ENCODE measurements at regions of chr4 and their contacts with region 1.

Region 1: DNA sequence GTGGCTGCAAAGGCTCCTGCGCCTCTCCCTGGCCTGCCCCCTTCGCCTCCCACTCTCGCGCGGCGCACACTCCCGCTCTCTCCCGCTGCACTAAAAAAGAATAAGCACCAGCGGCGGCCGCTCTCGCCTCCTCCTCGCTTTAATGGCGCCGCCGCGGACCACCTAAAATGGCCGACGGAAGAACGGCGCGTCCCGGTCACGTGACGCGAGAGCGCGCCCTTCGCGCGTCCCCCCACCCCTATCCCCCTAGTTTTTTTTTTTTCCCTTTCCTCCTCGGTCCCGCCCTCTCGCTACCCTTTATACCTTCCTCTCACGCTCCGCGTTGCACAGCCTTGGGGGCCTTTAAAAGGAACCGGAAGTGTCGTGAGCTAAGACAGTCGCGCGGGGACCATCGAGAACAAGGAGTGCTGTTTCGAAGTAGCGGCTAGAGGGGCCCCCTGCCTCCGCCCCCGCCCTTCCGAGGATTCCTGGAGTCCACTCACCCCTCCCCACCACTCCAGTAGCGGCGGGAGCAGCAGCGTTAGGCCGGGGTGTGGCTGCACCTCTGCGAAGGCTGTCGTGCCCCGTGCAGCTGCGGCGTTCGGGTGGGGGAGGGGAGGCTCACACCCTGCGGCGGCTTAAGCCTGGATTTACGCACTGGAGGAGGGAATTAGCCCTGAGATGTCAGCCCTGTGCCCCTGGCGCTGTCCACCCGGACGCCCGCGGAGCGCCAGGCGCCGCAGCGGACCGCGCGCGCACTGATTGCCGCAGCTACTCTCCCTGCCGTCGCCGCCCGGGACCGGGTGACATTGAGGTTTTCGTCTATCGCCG is at the start of gene HNRNPD:
- DNase-seq: peak; percentile 100
- H3K4me3 ChIP-seq: peak within 1 kb of the TSS; percentile 97 to 99 (median 98)
- H3K27ac ChIP-seq: peak within 1 kb of the TSS; percentile 99 to 100 (median 100)
- H3K4me1 ChIP-seq: peaks cover 0 to 49% (median 44%) of the 10 kb centered on the region in 4 donors
- H3K27me3 ChIP-seq: no peaks in the 10 kb centered on the region
- CTCF ChIP-seq: no peak
- EP300 ChIP-seq: peak in 2 of 4 donors; percentile 13 to 21
- POLR2A ChIP-seq: peak; percentile 91 to 92
- total RNA-seq, gene HNRNPD: 64.6 to 124 (median 78.0) TPM

Region 2: GRCh38 chr4:82284858-82285805 is 88.9 kb before region 1 on chr4:
- intact Hi-C with region 1: loop called (anchors 5 kb)
- DNase-seq: peak; percentile 100
- H3K4me3 ChIP-seq: peak overlapping the region; percentile 24 to 50 (median 44)
- H3K27ac ChIP-seq: peak overlapping the region; percentile 63 to 76 (median 70)
- H3K4me1 ChIP-seq: peaks cover 0 to 5% (median 5%) of the 10 kb centered on the region in 4 donors
- H3K27me3 ChIP-seq: no peaks in the 10 kb centered on the region
- CTCF ChIP-seq: peak; percentile 65 to 98 (median 81)
- EP300 ChIP-seq: no peak
- POLR2A ChIP-seq: no peak

Region 3: DNA sequence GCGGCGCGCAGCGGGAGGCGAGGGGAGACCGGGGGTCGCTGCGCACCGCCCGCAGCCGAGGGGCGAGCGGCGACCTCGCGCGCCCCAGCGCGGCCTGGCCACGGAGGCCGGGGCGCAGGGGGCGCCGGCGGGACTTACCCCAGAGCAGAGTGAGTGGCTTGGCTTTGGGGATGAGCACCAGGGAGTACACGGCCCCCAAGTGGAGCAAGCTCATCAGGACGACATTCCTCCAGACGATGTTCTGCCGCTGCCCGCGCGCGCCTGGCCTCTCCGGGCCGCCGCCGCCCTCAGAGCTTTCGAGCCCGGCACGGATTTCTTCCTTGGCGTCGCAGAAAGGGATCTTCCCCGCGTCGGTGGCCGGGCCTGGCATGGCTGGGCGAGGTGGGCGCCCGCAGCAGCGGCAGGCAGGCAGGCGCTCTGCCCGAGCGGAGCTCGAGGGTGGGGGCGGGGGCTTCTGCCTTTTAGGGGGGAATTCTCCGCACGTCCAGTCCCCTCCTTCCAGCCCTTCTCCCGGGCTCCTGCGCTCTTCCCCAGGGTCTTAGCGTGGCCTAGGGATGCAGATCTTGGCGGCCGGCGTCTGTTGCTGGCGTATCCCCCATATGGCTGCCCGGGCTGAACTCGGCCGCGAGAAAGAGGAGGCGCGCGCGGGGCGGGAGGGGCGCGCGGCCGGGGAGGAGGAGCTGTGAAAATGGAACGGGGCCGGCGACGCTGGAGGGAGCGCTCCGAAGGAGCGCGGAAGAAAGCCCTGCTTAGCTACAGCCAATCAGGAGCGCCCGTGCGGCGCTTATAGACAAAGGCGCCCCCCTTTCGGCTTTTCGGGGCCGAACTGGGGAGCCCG is 424.4 kb after region 1 on chr4 and contains the start of gene SCD5:
- intact Hi-C with region 1: loop called (anchors 10 kb)
- DNase-seq: peak; percentile 91
- H3K4me3 ChIP-seq: peak within 1 kb of the TSS; percentile 78 to 93 (median 84)
- H3K27ac ChIP-seq: peak within 1 kb of the TSS; percentile 81 to 86 (median 82)
- H3K4me1 ChIP-seq: peaks cover 0 to 22% (median 16%) of the 10 kb centered on the region in 4 donors
- H3K27me3 ChIP-seq: no peaks in the 10 kb centered on the region
- CTCF ChIP-seq: no peak
- EP300 ChIP-seq: no peak
- POLR2A ChIP-seq: no peak
- total RNA-seq, gene SCD5: 27.3 to 30.7 (median 29.0) TPM

Region 4: GRCh38 chr4:83012687-83013419 is 638.8 kb after region 1 on chr4:
- intact Hi-C with region 1: loop called (anchors 2 kb)
- DNase-seq: peak; percentile 99
- H3K4me3 ChIP-seq: peak overlapping the region; percentile 45 to 87 (median 68)
- H3K27ac ChIP-seq: peak overlapping the region; percentile 88 to 97 (median 89)
- H3K4me1 ChIP-seq: peaks cover 0 to 37% (median 33%) of the 10 kb centered on the region in 4 donors
- H3K27me3 ChIP-seq: no peaks in the 10 kb centered on the region
- CTCF ChIP-seq: peak in 3 of 4 experiments; percentile 47 to 62 (median 59)
- EP300 ChIP-seq: peak in 1 of 4 donors; percentile 69
- POLR2A ChIP-seq: peak; percentile 28 to 46